ENCODE measurements at regions of chr20 and their contacts with region 1.

Region 1: GRCh38 chr20:10469599-10469998 is 34.5 kb downstream of the SLX4IP start:
- DNase-seq: no peak
- H3K4me3 Mint-ChIP-seq: no peak overlapping the region
- H3K27ac Mint-ChIP-seq: peak overlapping the region; percentile 44
- H3K4me1 Mint-ChIP-seq: peaks cover 16% of the 10 kb centered on the region
- H3K27me3 Mint-ChIP-seq: no peaks in the 10 kb centered on the region

Region 2: GRCh38 chr20:10427060-10427692 is 42.4 kb before region 1 on chr20:
- intact Hi-C with region 1: no loop called
- DNase-seq: no peak
- H3K4me3 Mint-ChIP-seq: no peak overlapping the region
- H3K27ac Mint-ChIP-seq: no peak overlapping the region
- H3K4me1 Mint-ChIP-seq: peaks cover 42% of the 10 kb centered on the region
- H3K27me3 Mint-ChIP-seq: no peaks in the 10 kb centered on the region

Region 3: GRCh38 chr20:10511509-10512251 is 42.1 kb after region 1 on chr20:
- intact Hi-C with region 1: loop called (anchors 5 kb)
- DNase-seq: peak; percentile 67
- H3K4me3 Mint-ChIP-seq: peak overlapping the region; percentile 9
- H3K27ac Mint-ChIP-seq: peak overlapping the region; percentile 75
- H3K4me1 Mint-ChIP-seq: peaks cover 57% of the 10 kb centered on the region
- H3K27me3 Mint-ChIP-seq: no peaks in the 10 kb centered on the region

Region 4: GRCh38 chr20:10536531-10536930 is 66.9 kb after region 1 on chr20:
- intact Hi-C with region 1: loop called (anchors 5 kb)
- DNase-seq: no peak
- H3K4me3 Mint-ChIP-seq: no peak overlapping the region
- H3K27ac Mint-ChIP-seq: no peak overlapping the region
- H3K4me1 Mint-ChIP-seq: peaks cover 13% of the 10 kb centered on the region
- H3K27me3 Mint-ChIP-seq: no peaks in the 10 kb centered on the region

Region 5: GRCh38 chr20:10553326-10553984 is 83.9 kb after region 1 on chr20:
- intact Hi-C with region 1: loop called (anchors 5 kb)
- DNase-seq: no peak
- H3K4me3 Mint-ChIP-seq: no peak overlapping the region
- H3K27ac Mint-ChIP-seq: no peak overlapping the region
- H3K4me1 Mint-ChIP-seq: peaks cover 43% of the 10 kb centered on the region
- H3K27me3 Mint-ChIP-seq: peaks cover 7% of the 10 kb centered on the region

Region 6: DNA sequence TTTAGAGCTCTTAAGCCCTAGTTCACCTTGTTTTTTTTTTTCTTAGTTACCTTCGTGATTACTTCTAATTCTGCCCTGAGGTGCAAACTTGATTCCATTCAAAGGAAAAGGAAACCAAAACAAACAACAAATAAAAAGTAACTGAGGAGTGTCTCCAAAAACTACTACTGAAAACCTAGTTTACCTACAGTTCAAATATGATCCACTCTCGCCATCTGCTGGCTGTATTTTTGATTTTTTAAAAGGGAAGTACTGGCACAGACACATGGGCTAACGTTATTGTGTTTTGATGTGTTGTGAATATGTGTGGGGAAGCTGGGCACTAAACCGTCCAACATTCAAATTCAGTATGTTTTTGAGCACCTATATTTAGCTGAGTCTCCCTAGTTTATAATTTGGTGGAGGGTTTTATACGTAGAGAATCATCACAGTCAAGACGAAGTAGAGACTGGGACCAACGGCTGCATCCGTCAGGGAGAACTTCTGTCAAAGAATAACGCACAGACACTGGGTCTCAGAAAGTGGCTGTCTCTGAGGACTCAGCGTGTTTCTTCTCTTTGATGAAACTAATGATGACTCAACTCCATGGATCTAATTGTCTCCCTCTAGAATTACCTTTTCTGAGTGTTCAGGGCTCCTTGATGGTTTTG is 1074.6 kb after region 1 on chr20:
- intact Hi-C with region 1: loop called (anchors 5 kb)
- DNase-seq: no peak
- H3K4me3 Mint-ChIP-seq: no peak overlapping the region
- H3K27ac Mint-ChIP-seq: no peak overlapping the region
- H3K4me1 Mint-ChIP-seq: no peaks in the 10 kb centered on the region
- H3K27me3 Mint-ChIP-seq: no peaks in the 10 kb centered on the region